ENCODE measurements at regions of chr16 and their contacts with region 1.

Region 1: DNA sequence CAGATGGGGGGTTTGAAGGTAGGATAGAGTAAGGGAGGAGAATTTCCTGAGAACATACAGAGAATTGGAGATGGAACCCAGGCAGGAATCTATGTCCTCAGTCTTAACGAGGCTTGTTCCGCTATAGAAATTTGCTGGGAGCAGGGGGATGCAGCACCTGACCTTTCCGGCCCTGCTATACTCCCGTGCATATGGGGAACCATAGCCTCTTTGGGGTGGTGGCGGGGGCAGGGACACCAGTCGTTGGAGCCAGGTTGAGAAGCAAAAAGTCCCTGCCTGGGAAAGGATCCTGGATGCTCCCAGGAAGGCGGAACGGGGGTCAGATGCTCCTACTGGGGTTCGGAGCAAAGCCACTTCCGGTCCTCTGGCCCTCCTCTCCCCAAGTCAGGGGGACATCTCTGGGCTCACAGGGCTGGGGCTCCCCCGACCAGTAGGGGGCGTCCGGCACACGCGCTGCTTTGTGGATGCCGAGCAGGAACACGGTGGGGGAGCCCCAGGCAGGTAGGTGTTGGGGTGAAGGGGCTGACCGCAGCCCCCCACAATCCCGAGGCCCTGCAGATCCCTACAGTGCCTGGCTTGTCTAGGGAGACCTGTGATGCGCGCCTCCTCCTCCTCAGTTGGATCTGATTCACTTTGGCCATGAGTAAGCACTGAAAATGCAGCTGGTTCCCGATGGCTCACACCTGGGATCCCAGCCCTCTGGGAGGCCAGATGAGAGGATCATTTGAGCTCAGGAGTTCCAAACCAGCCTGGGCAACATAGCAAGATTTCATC is 15.5 kb upstream of the TFAP4 start:
- DNase-seq: no peak
- ATAC-seq: peak; percentile 100
- H3K4me3 ChIP-seq: no peak overlapping the region
- H3K27ac ChIP-seq: no peak overlapping the region
- H3K4me1 ChIP-seq: peaks cover 3% of the 10 kb centered on the region; the same call in 1 of the 2 replicates
- H3K27me3 ChIP-seq: no peaks in the 10 kb centered on the region; a peak in 1 of 4 replicates
- CTCF ChIP-seq: peak; percentile 97 to 100 (median 99); a peak in 5 of 6 replicates
- EP300 ChIP-seq: no peak
- POLR2A ChIP-seq: no peak
- RAD21 ChIP-seq: peak; percentile 92

Region 2: GRCh38 chr16:4232541-4233386 is 55.6 kb before region 1 on chr16:
- CTCF ChIA-PET with region 1: no interaction called
- POLR2A ChIA-PET with region 1: no interaction called
- RAD21 ChIA-PET with region 1: no interaction called
- SMC1A ChIA-PET with region 1: no interaction called
- in situ Hi-C with region 1: no loop called
- intact Hi-C with region 1: no loop called
- DNase-seq: no peak
- ATAC-seq: no peak
- H3K4me3 ChIP-seq: no peak overlapping the region
- H3K27ac ChIP-seq: no peak overlapping the region
- H3K4me1 ChIP-seq: no peaks in the 10 kb centered on the region
- H3K27me3 ChIP-seq: peaks cover 0 to 2% of the 10 kb centered on the region in 2 experiments; a peak in 3 of 4 replicates
- CTCF ChIP-seq: 0 out of 6 replicates have a peak, but pooled peaks of 1 of the 3 experiments have one; percentile 2
- EP300 ChIP-seq: no peak
- POLR2A ChIP-seq: no peak
- RAD21 ChIP-seq: no peak

Region 3: DNA sequence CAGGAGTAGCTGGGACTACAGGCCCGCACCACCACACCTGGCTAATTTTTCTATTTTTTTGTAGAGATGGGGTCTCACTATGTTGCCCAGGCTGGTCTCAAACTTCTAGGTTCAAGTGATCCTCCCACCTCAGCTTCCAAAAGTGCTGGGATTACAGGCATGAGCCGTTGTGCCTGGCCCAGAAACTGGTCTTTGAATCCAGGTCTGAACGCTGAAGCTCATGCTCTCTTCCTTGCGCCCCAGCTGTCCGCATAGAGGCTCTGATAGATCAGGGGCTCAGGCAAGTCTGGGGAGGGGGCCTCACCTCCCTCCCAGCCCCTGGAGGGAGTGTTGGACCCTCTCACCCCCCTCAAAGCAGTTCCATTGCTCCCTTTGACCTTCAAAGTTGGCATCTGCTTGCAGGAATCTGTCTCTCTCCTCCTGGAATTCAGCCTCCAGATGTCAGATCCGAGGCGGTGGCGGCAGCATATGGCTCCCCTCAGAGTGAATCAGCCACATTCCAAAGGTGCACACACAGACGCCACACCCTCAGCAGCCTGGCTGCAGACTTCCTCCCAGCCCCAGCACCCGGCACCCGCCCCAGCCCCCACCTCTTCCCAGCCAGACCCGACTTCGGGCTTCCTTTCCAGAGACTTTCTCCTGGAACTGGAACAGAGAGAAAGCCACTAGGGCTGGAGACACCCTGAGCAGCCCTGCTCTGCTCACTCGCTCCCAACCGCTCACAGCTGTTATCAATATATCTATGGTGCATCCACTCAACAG is 10.6 kb after region 1 on chr16:
- CTCF ChIA-PET with region 1: interaction called, 14 read pairs
- POLR2A ChIA-PET with region 1: no interaction called
- RAD21 ChIA-PET with region 1: interaction called, 3 read pairs
- SMC1A ChIA-PET with region 1: no interaction called
- in situ Hi-C with region 1: no loop called
- intact Hi-C with region 1: no loop called
- DNase-seq: no peak
- ATAC-seq: no peak
- H3K4me3 ChIP-seq: no peak overlapping the region
- H3K27ac ChIP-seq: no peak overlapping the region
- H3K4me1 ChIP-seq: no peaks in the 10 kb centered on the region
- H3K27me3 ChIP-seq: no peaks in the 10 kb centered on the region
- CTCF ChIP-seq: no peak
- EP300 ChIP-seq: no peak
- POLR2A ChIP-seq: no peak
- RAD21 ChIP-seq: no peak

Region 4: DNA sequence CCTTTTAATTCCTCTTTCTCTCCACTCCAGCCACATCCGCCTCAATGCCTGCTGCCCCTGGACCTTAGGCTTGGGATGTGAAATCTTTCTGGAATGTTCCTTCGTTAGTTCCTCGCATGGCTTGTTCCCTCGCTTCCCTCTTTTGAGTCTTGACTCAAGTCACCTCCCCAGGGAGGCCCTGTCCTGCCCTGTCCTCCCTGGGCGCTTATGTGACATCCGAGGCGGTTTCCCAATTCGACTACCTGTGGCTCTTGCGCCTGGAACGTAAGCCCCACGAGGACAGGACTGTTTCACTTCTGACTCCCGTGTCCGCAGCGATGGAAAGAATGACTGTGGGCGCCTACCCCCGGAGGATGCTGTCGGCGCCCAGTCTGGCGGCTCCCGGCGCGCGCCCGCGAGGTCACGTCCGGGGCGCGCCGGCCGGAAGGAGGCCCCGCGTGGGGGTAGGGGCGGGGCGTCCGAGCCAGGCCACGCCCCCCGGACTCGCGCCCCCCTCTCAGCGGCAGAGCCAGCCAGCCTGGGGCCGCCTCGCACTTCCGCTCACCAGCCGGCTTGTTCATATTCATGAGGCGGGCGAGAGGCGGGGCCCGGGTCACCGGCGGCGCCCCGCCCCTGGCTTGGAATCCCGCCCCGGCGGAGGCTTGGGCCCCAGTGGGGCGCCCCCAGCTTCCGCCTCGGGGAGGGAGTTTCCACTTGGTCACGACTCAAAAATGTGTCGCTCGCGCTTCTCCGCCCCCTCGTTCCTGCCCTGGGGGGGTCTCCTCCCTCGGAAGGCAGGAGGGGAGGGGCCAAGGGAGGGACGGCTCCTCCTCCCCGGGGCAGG is 19.1 kb after region 1 on chr16:
- CTCF ChIA-PET with region 1: interaction called, 54 read pairs
- POLR2A ChIA-PET with region 1: interaction called, 3 read pairs
- RAD21 ChIA-PET with region 1: interaction called, 7 read pairs
- SMC1A ChIA-PET with region 1: interaction called, 16 read pairs
- in situ Hi-C with region 1: no loop called
- intact Hi-C with region 1: no loop called
- DNase-seq: peak; percentile 72
- ATAC-seq: peak; percentile 92
- H3K4me3 ChIP-seq: peak overlapping the region; percentile 94
- H3K27ac ChIP-seq: peak overlapping the region; percentile 87
- H3K4me1 ChIP-seq: peaks cover 13% of the 10 kb centered on the region
- H3K27me3 ChIP-seq: no peaks in the 10 kb centered on the region
- CTCF ChIP-seq: no peak
- EP300 ChIP-seq: no peak
- POLR2A ChIP-seq: peak; percentile 84
- RAD21 ChIP-seq: no peak

Region 5: DNA sequence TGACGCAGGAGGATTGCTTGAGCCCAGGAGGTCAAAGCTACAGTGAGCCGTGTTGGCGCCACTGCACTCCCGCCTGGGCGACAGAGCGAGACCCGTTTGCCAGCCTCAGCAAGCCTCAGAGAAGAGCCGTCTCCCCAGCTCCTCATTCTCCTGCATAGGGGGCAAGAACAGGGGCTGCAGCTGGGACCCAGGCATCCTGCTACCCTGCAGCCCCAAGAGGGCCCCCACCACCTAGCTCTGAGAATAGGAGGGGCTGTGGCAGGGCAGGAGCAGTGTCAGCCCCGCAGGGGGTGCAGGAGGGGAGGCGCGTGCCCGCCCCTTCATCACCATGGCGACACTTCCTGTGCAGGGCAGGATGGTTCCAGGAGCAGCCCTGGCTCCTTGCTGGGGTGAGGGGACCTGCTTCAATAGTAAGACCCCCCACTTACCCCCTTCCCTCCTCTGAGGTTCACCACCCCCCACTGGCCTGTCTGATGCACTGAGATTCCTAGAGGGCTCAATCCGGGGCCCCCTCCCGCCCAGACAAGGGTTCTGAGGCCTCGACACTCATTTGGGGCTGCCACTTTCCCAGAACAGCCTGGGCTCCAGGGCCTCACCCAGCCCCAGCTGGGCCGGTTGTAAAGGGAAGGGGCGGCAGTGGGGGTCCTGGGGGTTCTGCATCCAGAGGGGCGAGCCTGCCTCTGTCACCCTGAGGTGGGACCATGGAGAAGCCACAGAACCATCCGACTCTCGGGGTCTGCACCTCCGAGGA is 103.5 kb after region 1 on chr16:
- CTCF ChIA-PET with region 1: no interaction called
- POLR2A ChIA-PET with region 1: no interaction called
- RAD21 ChIA-PET with region 1: interaction called, 3 read pairs
- SMC1A ChIA-PET with region 1: no interaction called
- in situ Hi-C with region 1: loop called (anchors 5 kb)
- intact Hi-C with region 1: no loop called
- DNase-seq: no peak
- ATAC-seq: no peak
- H3K4me3 ChIP-seq: no peak overlapping the region
- H3K27ac ChIP-seq: no peak overlapping the region
- H3K4me1 ChIP-seq: no peaks in the 10 kb centered on the region
- H3K27me3 ChIP-seq: no peaks in the 10 kb centered on the region
- CTCF ChIP-seq: no peak
- EP300 ChIP-seq: no peak
- POLR2A ChIP-seq: no peak
- RAD21 ChIP-seq: no peak